ENCODE measurements at regions of chr12 and their contacts with region 1.

Region 1: GRCh38 chr12:126874427-126875026 is 1392.4 kb upstream of the TMEM132C start:
- DNase-seq: peak; percentile 84
- H3K4me3 Mint-ChIP-seq: no peak overlapping the region
- H3K27ac Mint-ChIP-seq: no peak overlapping the region
- H3K4me1 Mint-ChIP-seq: no peaks in the 10 kb centered on the region
- H3K27me3 Mint-ChIP-seq: no peaks in the 10 kb centered on the region
- CTCF ChIP-seq: peak; percentile 85

Region 2: GRCh38 chr12:126069549-126070165 is 804.9 kb before region 1 on chr12:
- CTCF ChIA-PET with region 1: no interaction called
- intact Hi-C with region 1: loop called (anchors 1 kb)
- DNase-seq: peak; percentile 82
- H3K4me3 Mint-ChIP-seq: no peak overlapping the region
- H3K27ac Mint-ChIP-seq: no peak overlapping the region
- H3K4me1 Mint-ChIP-seq: peaks cover 9% of the 10 kb centered on the region
- H3K27me3 Mint-ChIP-seq: no peaks in the 10 kb centered on the region
- CTCF ChIP-seq: peak; percentile 77

Region 3: DNA sequence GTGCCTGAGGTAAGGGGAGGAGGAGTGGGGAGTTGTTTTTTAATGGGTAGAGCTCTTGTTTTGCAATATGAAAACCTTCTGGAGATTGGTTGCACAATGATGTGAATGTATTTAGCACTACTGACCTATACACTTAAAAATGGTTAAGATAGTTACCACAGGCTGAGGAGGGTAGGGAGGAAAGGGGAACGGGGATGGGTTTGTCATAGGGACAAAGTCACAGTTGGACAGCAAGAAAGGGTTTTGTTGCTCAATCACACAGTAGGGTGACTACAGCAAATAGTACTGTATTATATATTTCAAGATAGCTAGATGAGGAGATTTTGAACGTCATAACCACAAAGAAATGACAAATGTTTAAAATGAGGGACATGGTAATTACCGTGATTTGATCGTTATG is 246.9 kb before region 1 on chr12:
- CTCF ChIA-PET with region 1: no interaction called
- intact Hi-C with region 1: loop called (anchors 10 kb)
- DNase-seq: no peak
- H3K4me3 Mint-ChIP-seq: no peak overlapping the region
- H3K27ac Mint-ChIP-seq: no peak overlapping the region
- H3K4me1 Mint-ChIP-seq: no peaks in the 10 kb centered on the region
- H3K27me3 Mint-ChIP-seq: peaks cover 8% of the 10 kb centered on the region
- CTCF ChIP-seq: no peak

Region 4: DNA sequence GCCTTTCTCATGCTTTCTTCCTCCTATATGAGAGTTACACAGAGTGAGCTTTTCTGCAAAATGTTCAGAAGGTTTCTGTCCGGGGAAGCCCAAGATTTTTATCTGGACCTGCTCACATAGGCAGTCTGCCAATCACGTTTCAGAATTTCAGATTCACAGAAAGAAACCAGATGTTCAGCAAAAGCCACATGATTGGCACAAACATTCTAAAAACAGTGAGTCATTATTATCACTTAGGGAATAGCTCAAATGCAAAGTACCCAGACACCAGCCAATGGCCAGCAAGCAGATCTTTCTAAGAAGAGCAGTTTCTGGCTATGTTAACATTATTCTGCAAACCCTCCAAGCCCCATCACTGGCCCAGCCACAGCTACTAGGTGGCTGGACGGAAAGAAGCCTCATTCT is 166.0 kb before region 1 on chr12:
- CTCF ChIA-PET with region 1: no interaction called
- intact Hi-C with region 1: loop called (anchors 10 kb)
- DNase-seq: no peak
- H3K4me3 Mint-ChIP-seq: no peak overlapping the region
- H3K27ac Mint-ChIP-seq: no peak overlapping the region
- H3K4me1 Mint-ChIP-seq: no peaks in the 10 kb centered on the region
- H3K27me3 Mint-ChIP-seq: no peaks in the 10 kb centered on the region
- CTCF ChIP-seq: no peak

Region 5: GRCh38 chr12:126747530-126748149 is 126.9 kb before region 1 on chr12:
- CTCF ChIA-PET with region 1: no interaction called
- intact Hi-C with region 1: loop called (anchors 1 kb)
- DNase-seq: peak; percentile 78
- H3K4me3 Mint-ChIP-seq: no peak overlapping the region
- H3K27ac Mint-ChIP-seq: no peak overlapping the region
- H3K4me1 Mint-ChIP-seq: no peaks in the 10 kb centered on the region
- H3K27me3 Mint-ChIP-seq: no peaks in the 10 kb centered on the region
- CTCF ChIP-seq: peak; percentile 95

Region 6: GRCh38 chr12:126784328-126784921 is 90.1 kb before region 1 on chr12:
- CTCF ChIA-PET with region 1: interaction called, 4 read pairs
- intact Hi-C with region 1: loop called (anchors 1 kb)
- DNase-seq: peak; percentile 73
- H3K4me3 Mint-ChIP-seq: no peak overlapping the region
- H3K27ac Mint-ChIP-seq: no peak overlapping the region
- H3K4me1 Mint-ChIP-seq: peaks cover 7% of the 10 kb centered on the region
- H3K27me3 Mint-ChIP-seq: no peaks in the 10 kb centered on the region
- CTCF ChIP-seq: peak; percentile 64

Measured in Calu3 (cell line).